ENCODE measurements at regions of chr9 and their contacts with region 1.

Region 1: DNA sequence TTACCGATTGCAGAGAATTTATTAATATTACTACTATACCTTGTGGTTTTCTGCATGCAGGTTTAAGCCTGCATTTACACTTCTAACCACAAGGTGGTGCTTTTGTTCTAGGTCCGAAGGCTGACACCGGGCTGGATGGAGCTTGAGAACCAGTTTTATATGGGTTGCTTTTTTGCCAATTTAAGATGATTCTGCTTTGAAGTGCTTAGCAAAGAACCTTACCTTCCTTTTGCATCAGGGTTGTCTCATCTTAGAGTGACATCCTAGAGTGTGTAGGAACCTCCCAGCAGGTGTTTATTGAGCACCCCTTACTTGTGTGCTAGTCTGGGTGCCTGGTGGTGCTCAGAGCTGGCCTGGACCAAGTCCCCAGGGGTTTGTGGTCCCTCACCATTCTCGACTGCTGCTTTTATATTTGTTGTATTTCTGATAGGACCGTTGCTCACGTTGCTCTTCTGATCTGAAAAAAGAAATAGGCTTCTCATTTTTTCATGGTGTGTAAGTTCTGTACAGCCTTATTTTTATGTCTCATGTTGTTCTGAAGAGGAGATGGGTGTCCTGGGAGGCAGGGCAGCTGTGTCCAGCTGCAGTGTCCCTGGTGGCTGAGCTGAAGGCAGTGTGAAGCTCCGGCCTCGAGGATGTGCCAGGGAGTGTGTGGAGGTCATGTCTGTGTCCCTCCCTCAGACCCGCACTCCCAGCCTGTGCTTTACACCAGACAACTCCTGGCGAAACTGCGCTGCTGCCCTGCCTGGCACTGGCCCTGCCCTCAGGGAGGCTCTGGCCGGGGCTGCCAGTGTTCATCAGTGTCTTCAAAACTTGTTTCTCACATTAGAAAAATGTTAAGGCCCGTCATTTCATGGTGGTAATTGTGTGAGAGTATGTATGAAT is 54.3 kb downstream of the EHMT1 start:
- DNase-seq: peak; percentile 40 to 62 (median 54)
- H3K4me3 ChIP-seq: no peak overlapping the region
- H3K4me3 Mint-ChIP-seq: no peak overlapping the region
- H3K27ac ChIP-seq: peak overlapping the region in 1 of 2 donors; percentile 20
- H3K27ac Mint-ChIP-seq: peak overlapping the region in 2 of 7 donors; percentile 63 to 70
- H3K4me1 ChIP-seq: peaks cover 16 to 32% of the 10 kb centered on the region in 2 donors
- H3K4me1 Mint-ChIP-seq: peaks cover 34% of the 10 kb centered on the region
- H3K27me3 ChIP-seq: no peaks in the 10 kb centered on the region
- H3K27me3 Mint-ChIP-seq: peaks cover 0 to 2% (median 0%) of the 10 kb centered on the region in 3 donors
- CTCF ChIP-seq: peak; percentile 93

Region 2: DNA sequence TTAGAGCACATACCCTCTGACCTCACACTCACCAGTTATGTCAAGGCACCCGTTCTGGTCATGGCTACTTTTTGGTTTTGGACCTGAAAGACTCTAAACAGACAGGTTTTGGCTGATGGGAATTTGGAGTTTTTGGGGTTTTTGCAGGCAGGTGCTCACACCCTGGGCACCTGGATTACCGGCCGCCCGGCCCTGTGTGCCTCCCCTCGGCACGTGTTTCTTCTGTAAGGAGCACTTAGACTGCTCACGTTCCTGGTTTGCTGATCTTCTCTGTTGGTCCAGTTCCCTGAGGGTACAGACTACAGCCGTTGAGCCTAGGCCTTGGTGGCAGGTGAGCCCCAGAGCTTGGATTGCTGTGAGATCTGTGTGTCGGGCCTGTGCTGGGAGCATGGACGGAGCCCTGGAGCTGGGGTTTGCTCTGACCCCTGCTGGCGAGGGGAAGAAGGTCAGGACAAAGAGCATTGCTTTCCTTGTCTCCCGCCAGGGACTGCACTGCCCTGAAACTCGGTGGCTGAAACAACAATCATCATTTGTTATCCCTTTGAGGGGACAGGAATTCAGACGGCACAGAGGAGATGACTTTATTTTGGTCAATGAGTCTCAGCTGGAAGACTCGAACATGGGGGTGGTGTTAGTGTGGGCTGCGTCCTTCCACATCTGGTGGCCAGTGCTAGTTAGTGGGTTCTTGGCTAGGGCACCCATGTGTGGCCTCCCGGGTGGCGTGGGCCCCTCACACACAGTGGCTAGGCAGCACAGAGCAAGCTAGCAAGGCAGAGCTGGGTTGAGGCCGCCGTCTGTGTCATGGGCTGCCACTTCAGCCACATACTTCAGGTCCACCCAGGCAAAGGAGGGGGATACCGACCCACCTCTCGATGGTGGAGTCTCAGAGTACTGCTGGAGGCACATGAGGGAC is 22.1 kb after region 1 on chr9:
- intact Hi-C with region 1: loop called (anchors 1 to 2 kb)
- DNase-seq: peak; percentile 38 to 53 (median 44)
- H3K4me3 ChIP-seq: no peak overlapping the region
- H3K4me3 Mint-ChIP-seq: no peak overlapping the region
- H3K27ac ChIP-seq: peak overlapping the region in 1 of 2 donors; percentile 31
- H3K27ac Mint-ChIP-seq: peak overlapping the region in 2 of 7 donors; percentile 12 to 51
- H3K4me1 ChIP-seq: peaks cover 26% of the 10 kb centered on the region in 2 donors
- H3K4me1 Mint-ChIP-seq: peaks cover 35% of the 10 kb centered on the region
- H3K27me3 ChIP-seq: no peaks in the 10 kb centered on the region
- H3K27me3 Mint-ChIP-seq: peaks cover 0 to 2% (median 0%) of the 10 kb centered on the region in 3 donors
- CTCF ChIP-seq: peak; percentile 82

Measured in CD14-positive monocyte (primary cell).